ENCODE measurements at regions of chr10 and their contacts with region 1.

Region 1: GRCh38 chr10:48656241-48656913 is 28.3 kb upstream of the WDFY4 start:
- DNase-seq: peak; percentile 89
- H3K4me3 ChIP-seq: peak overlapping the region; percentile 38
- H3K27ac ChIP-seq: no peak overlapping the region
- H3K4me1 ChIP-seq: no peaks in the 10 kb centered on the region
- H3K27me3 ChIP-seq: no peaks in the 10 kb centered on the region
- CTCF ChIP-seq: peak; percentile 96

Region 2: GRCh38 chr10:48363617-48364355 is 292.6 kb before region 1 on chr10:
- intact Hi-C with region 1: loop called (anchors 5 kb)
- DNase-seq: peak; percentile 33
- H3K4me3 ChIP-seq: no peak overlapping the region
- H3K27ac ChIP-seq: no peak overlapping the region
- H3K4me1 ChIP-seq: peaks cover 5% of the 10 kb centered on the region
- H3K27me3 ChIP-seq: no peaks in the 10 kb centered on the region
- CTCF ChIP-seq: peak; percentile 57

Region 3: GRCh38 chr10:48551861-48552591 is 104.4 kb before region 1 on chr10:
- intact Hi-C with region 1: loop called (anchors 1 kb)
- DNase-seq: no peak
- H3K4me3 ChIP-seq: no peak overlapping the region
- H3K27ac ChIP-seq: no peak overlapping the region
- H3K4me1 ChIP-seq: no peaks in the 10 kb centered on the region
- H3K27me3 ChIP-seq: no peaks in the 10 kb centered on the region
- CTCF ChIP-seq: peak; percentile 67

Region 4: DNA sequence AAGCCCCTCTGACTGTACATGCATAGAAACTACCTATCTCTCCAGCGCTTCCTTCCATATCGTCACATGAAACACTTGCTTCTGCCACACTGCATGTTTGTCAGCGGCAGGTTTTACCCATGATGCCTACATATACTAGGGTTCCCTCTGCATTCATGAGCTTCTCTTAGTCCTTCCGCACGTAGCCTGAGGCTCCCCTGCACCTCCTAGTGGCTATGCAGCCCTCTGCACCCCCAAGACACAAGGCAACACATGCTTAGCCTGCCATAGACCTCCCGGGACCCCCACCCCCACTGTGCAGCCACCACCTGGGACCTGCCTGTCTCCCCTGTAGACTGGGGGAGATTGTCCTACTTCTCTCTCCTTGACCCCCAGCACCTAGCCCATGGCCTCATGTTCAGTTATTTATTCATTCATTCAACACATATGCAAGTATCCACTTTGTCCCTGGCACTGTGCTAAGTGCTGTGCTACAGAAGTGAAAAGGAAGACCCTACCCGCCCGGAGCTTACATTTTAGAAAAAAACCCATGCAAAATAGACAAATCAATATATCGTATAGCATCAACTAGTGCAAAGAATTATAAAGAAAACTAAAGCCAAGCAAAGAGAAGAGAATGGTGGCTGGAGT is 508.3 kb after region 1 on chr10:
- intact Hi-C with region 1: loop called (anchors 5 kb)
- DNase-seq: peak; percentile 31
- H3K4me3 ChIP-seq: no peak overlapping the region
- H3K27ac ChIP-seq: no peak overlapping the region
- H3K4me1 ChIP-seq: no peaks in the 10 kb centered on the region
- H3K27me3 ChIP-seq: no peaks in the 10 kb centered on the region
- CTCF ChIP-seq: peak; percentile 57

Region 5: DNA sequence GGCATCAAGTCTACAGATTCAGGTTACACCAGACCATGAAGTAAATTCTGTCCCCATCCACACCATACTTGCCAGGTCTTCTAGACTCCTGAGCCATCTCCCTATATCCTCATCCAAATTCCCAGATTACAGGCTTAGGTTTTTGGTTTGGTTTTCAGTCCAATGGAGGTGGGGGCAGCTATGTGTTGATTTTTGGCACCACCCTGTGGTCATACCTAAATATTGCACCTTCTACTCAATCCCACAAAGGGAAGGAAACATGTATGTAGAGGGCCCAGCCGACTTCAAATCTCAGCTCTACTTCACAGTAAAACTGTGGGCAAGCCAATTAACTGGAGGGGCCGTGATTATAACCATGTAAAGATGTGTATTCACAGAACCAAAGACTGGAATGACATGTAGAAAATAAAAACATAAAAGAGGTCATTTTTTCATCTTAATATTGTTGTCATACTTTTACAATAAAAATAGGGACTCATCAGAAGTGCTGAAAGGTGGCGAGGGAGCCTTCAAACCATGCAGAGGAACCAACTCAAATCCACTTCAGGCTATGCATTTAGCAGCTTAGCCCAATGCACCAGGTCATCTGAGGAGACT is 862.7 kb after region 1 on chr10:
- intact Hi-C with region 1: loop called (anchors 10 kb)
- DNase-seq: no peak
- H3K4me3 ChIP-seq: no peak overlapping the region
- H3K27ac ChIP-seq: no peak overlapping the region
- H3K4me1 ChIP-seq: no peaks in the 10 kb centered on the region
- H3K27me3 ChIP-seq: no peaks in the 10 kb centered on the region
- CTCF ChIP-seq: peak; percentile 54